ENCODE measurements at regions of chr1 and their contacts with region 1.

Region 1: GRCh38 chr1:64487061-64487460 is 17.1 kb downstream of the CACHD1 start:
- DNase-seq: no peak
- H3K4me3 ChIP-seq: no peak overlapping the region
- H3K27ac ChIP-seq: no peak overlapping the region
- H3K4me1 ChIP-seq: peaks cover 9 to 31% (median 19%) of the 10 kb centered on the region in 4 experiments
- H3K27me3 ChIP-seq: no peaks in the 10 kb centered on the region
- CTCF ChIP-seq: peak in 2 of 3 experiments; percentile 42 to 59; a peak in 3 of 4 replicates
- EP300 ChIP-seq: no peak
- POLR2A ChIP-seq: no peak
- RAD21 ChIP-seq: peak; percentile 57 to 71

Region 2: GRCh38 chr1:64469977-64470664 is 16.9 kb before region 1 on chr1 and contains the start of gene CACHD1:
- CTCF ChIA-PET with region 1: interaction called, 4 read pairs
- POLR2A ChIA-PET with region 1: interaction called, 22 read pairs
- DNase-seq: peak in 1 of 2 experiments; percentile 85
- H3K4me3 ChIP-seq: peak within 1 kb of the TSS; percentile 76 to 94 (median 90)
- H3K27ac ChIP-seq: peak within 1 kb of the TSS; percentile 39; the same call in 1 of the 2 replicates
- H3K4me1 ChIP-seq: peaks cover 9 to 20% (median 13%) of the 10 kb centered on the region in 4 experiments
- H3K27me3 ChIP-seq: peaks cover 0 to 10% (median 2%) of the 10 kb centered on the region in 4 experiments; a peak in 3 of 7 replicates
- CTCF ChIP-seq: peak in 2 of 3 experiments; percentile 1 to 15; a peak in 2 of 4 replicates
- EP300 ChIP-seq: no peak
- POLR2A ChIP-seq: peak; percentile 71 to 94
- RAD21 ChIP-seq: peak; percentile 22 to 50
- total RNA-seq, gene CACHD1: 42.5 and 44.7 TPM in 2 replicates

Region 3: DNA sequence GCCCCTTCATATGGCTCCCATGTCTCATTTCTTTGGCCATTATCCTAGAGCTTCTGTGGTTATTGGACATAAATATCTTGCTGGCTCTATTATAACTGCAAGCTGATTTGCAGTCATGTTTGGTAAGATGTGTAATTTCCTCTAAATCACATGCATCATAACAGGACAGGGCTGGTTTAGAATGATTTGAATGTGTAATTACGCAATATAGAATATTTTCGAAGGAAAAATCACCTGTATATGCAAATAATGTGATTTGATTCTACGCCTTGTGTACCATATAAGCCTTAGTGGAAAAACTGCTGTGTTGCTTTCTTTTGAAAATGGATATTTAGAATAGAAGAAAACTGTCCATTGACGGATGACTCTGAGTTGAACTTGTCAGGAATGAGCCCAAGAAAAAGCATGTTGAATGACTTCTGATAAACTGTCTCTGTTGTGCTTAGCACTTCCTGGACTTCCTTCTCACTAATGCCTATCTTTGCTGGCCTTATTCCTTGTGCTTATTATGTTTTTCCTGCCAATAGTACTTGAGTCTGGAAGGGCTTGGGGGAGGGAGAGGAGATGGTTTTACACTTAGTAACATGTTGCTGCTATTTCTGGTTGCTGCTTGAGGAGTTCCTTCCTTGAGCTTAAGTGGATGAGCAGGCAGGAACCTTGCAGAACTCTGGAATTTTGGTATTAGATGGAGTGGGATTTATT is 10.7 kb before region 1 on chr1:
- CTCF ChIA-PET with region 1: interaction called, 12 read pairs
- POLR2A ChIA-PET with region 1: interaction called, 22 read pairs
- DNase-seq: no peak
- H3K4me3 ChIP-seq: 0 out of 8 replicates have a peak overlapping the region, but pooled peaks of 1 of the 4 experiments have one; percentile 4
- H3K27ac ChIP-seq: no peak overlapping the region
- H3K4me1 ChIP-seq: peaks cover 14 to 31% (median 25%) of the 10 kb centered on the region in 4 experiments
- H3K27me3 ChIP-seq: peaks cover 0 to 1% (median 0%) of the 10 kb centered on the region in 4 experiments; a peak in 1 of 7 replicates
- CTCF ChIP-seq: no peak
- EP300 ChIP-seq: no peak
- POLR2A ChIP-seq: no peak
- RAD21 ChIP-seq: no peak

Measured in H1 (cell line).